ENCODE measurements at regions of chr17 and their contacts with region 1.

Region 1: GRCh38 chr17:53837131-53837530 is 14.4 kb downstream of the KIF2B start:
- DNase-seq: no peak
- H3K4me3 ChIP-seq: no peak overlapping the region
- H3K27ac ChIP-seq: no peak overlapping the region
- H3K4me1 ChIP-seq: no peaks in the 10 kb centered on the region
- H3K27me3 ChIP-seq: no peaks in the 10 kb centered on the region
- CTCF ChIP-seq: no peak
- EP300 ChIP-seq: no peak
- POLR2A ChIP-seq: no peak

Region 2: DNA sequence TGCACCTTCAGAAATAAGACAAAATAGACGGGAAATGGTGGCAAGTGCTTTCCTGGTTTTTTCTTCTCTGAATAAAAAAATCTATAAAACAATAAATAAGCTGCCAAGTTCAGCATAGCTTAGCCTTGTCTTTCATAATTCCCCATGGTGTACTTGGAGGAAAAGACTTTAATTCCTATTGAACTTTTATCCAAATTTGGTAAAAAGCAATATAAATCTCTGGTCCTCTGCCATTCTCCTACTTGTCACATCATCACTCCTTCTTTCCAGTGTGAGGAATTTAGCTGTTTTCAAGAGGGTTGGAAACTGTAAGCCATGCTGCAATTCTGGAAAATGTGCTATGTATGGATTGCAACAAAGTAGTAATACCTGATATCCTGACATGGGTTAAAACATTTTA is 566.2 kb before region 1 on chr17:
- in situ Hi-C with region 1: loop called in 1 of 4 experiments (anchors 25 kb)
- intact Hi-C with region 1: no loop called
- DNase-seq: no peak
- H3K4me3 ChIP-seq: no peak overlapping the region
- H3K27ac ChIP-seq: no peak overlapping the region
- H3K4me1 ChIP-seq: no peaks in the 10 kb centered on the region
- H3K27me3 ChIP-seq: no peaks in the 10 kb centered on the region
- CTCF ChIP-seq: no peak
- EP300 ChIP-seq: no peak
- POLR2A ChIP-seq: no peak

Region 3: DNA sequence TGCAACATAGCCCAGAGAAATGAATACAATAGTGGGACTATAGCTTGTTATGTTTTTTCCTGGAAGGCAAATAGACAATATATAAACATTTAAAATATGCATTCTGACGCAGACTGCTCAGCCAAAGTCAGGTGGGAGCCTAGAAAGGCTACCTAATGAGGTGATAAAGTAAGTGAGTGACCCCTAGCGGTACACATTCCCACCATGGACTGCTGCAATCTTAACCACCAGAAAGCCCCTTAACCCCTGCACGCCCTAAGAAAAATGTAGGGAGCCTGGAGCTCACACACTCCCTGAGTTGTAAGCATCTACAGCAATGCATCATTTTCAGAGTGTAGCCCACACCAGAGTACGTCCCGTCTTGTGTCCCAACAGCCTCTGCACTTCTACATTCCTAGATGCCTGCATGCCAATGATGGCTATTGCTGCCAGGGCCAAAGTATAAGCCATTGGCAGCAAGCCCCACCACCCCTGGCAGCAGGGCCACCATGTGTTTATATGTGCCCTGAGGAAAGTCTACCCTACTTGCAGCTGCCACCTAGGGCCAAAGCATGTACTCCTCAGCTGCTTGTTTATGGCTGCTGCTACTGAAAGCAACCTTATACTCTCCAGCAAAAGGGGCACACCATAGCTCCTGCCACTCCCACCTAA is 113.2 kb after region 1 on chr17:
- in situ Hi-C with region 1: no loop called
- intact Hi-C with region 1: no loop called
- DNase-seq: no peak
- H3K4me3 ChIP-seq: no peak overlapping the region
- H3K27ac ChIP-seq: no peak overlapping the region
- H3K4me1 ChIP-seq: no peaks in the 10 kb centered on the region
- H3K27me3 ChIP-seq: no peaks in the 10 kb centered on the region
- CTCF ChIP-seq: no peak
- EP300 ChIP-seq: no peak
- POLR2A ChIP-seq: no peak

Measured in transverse colon (tissue), 4 donors.